ENCODE measurements at regions of chr7 and their contacts with region 1.

Region 1: DNA sequence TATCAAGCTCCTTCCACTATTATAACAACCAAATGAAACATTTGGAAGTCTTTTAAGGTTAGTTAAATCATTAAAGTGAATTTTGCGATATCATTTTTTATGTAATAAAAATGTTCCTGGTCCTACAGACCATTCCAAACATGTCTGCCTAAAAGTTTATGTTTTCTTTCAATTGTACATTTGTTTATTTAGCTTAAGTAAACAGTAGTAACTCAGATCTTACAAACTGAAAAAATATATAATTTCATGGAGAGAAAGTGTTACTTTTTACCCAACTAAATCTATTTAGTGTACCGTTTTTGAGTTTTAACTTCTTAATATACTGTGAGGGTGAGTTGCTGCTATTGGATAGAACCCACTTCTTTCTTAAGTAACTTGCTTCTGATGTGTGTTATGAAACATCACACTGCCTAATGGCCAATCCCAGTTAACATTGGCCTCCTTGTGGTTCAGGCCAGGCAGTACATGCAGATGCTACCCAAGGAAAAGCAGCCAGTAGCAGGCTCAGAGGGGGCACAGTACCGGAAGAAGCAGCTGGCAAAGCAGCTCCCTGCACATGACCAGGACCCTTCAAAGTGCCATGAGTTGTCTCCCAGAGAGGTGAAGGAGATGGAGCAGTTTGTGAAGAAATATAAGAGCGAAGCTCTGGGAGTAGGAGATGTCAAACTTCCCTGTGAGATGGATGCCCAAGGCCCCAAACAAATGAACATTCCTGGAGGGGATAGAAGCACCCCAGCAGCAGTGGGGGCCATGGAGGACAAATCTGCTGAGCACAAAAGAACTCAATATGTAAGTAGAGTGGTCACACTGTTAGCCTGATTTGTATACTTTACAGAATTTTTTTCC is 39.6 kb downstream of the TES start:
- DNase-seq: peak in 1 of 2 experiments; percentile 54
- H3K4me3 ChIP-seq: no peak overlapping the region
- H3K27ac ChIP-seq: no peak overlapping the region
- H3K4me1 ChIP-seq: peaks cover 0 to 2% (median 0%) of the 10 kb centered on the region in 4 experiments; a peak in 1 of 7 replicates
- H3K27me3 ChIP-seq: no peaks in the 10 kb centered on the region
- CTCF ChIP-seq: peak; percentile 60 to 76 (median 69)
- EP300 ChIP-seq: no peak
- POLR2A ChIP-seq: no peak
- RAD21 ChIP-seq: peak; percentile 46 to 64

Region 2: GRCh38 chr7:116011584-116011983 is 238.3 kb before region 1 on chr7:
- CTCF ChIA-PET with region 1: no interaction called
- POLR2A ChIA-PET with region 1: no interaction called
- DNase-seq: no peak
- H3K4me3 ChIP-seq: no peak overlapping the region
- H3K27ac ChIP-seq: no peak overlapping the region
- H3K4me1 ChIP-seq: 0 out of 7 replicates have a peak, but pooled peaks cover 0 to 3% (median 0%) of the 10 kb centered on the region in 4 experiments
- H3K27me3 ChIP-seq: no peaks in the 10 kb centered on the region
- CTCF ChIP-seq: no peak
- EP300 ChIP-seq: no peak
- POLR2A ChIP-seq: no peak
- RAD21 ChIP-seq: no peak

Region 3: DNA sequence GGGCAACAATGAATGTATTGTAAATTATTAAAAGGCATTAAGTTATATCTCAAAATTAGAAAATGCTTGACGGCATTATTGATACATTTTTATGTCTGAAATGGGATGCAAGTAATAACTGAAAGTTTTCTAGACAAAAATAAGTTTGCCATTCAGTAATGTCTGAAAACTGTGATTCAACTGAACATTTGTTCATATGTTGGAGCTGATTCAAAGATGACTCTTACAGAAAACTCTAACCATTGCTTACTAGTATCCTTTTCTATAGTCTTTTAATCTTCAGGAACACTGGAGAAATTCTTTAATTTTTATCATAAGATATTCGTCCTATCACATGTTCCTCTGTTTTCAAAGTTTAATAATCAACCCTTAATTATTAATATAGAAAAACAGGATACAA is 148.2 kb before region 1 on chr7:
- CTCF ChIA-PET with region 1: no interaction called
- POLR2A ChIA-PET with region 1: no interaction called
- DNase-seq: no peak
- H3K4me3 ChIP-seq: no peak overlapping the region
- H3K27ac ChIP-seq: no peak overlapping the region
- H3K4me1 ChIP-seq: peaks cover 0 to 3% (median 1%) of the 10 kb centered on the region in 4 experiments; a peak in 2 of 7 replicates
- H3K27me3 ChIP-seq: no peaks in the 10 kb centered on the region
- CTCF ChIP-seq: no peak
- EP300 ChIP-seq: no peak
- POLR2A ChIP-seq: no peak
- RAD21 ChIP-seq: no peak

Region 4: DNA sequence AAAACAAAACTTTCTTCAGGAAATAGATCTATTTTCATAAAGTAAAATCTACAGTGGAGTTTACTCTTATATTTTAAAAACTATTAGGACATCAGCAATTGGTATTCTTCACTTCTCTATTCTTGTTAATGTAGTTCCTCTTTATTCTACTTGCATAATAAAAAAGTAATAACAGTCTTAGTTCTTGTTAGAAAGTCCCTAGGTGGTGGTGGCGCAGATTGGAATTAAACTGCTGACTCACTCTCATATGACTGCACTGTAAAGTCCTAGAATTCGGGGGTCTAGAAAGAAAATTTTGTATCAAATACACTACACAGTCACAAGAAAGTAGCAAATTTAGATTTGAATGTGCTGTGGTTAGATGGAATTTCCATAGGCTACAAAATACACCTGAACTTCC is 84.2 kb before region 1 on chr7:
- CTCF ChIA-PET with region 1: interaction called, 42 read pairs
- POLR2A ChIA-PET with region 1: no interaction called
- DNase-seq: no peak
- H3K4me3 ChIP-seq: no peak overlapping the region
- H3K27ac ChIP-seq: no peak overlapping the region
- H3K4me1 ChIP-seq: peaks cover 0 to 4% (median 0%) of the 10 kb centered on the region in 4 experiments; a peak in 2 of 7 replicates
- H3K27me3 ChIP-seq: no peaks in the 10 kb centered on the region
- CTCF ChIP-seq: no peak
- EP300 ChIP-seq: no peak
- POLR2A ChIP-seq: no peak
- RAD21 ChIP-seq: no peak

Region 5: DNA sequence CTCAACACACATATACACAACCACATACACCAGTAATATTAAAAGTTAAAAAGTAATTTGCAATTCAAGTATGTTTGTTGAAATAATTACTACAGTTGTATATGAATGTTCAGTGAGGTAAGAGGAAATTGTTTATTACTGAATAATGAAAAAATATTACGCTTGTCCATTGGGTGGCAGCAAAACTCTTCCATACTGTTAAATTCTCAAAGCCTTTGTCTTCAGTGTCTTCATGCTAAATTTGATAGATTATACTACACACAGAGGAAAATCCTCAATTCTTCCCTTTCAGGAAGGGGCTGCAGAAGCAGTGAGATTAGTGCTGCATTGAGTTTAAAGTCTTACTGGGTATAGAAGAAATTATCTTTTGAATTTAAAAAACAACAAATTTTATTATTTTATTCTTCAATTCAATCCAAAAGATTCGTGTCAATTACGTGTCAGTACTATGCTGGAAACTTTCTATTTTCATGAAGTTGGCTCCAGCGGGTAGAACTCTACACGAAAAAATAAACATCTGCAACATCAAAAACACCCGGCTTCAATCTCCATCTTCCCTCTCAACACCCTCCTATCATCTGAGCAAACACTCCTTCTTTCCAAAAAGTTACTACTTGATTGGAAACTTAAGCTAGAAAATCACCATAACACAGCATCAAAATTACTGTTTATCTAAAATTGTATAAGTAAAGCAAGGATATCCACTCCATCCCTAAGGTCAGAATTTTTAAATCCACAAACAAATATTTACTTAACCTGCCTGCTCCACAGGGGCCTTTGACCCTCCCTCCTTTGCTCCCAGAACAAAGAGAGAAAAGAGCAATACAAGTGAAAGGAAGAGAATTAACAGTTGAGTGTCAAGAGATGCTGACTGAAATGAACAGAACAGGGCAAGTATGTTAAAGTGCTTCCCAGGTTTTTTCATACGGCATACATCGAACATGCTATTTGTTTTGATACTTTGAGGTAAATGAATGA is 76.6 kb before region 1 on chr7:
- CTCF ChIA-PET with region 1: interaction called, 42 read pairs
- POLR2A ChIA-PET with region 1: no interaction called
- DNase-seq: no peak
- H3K4me3 ChIP-seq: no peak overlapping the region
- H3K27ac ChIP-seq: no peak overlapping the region
- H3K4me1 ChIP-seq: no peaks in the 10 kb centered on the region; a peak in 1 of 7 replicates
- H3K27me3 ChIP-seq: no peaks in the 10 kb centered on the region
- CTCF ChIP-seq: peak in 1 of 3 experiments; percentile 18; a peak in 2 of 4 replicates
- EP300 ChIP-seq: no peak
- POLR2A ChIP-seq: no peak
- RAD21 ChIP-seq: peak; percentile 62 to 68

Measured in H1 (cell line).